OCI-LY7 (cell line): ENCODE measurements at regions of chr2 and their contacts with region 1.

Region 1: DNA sequence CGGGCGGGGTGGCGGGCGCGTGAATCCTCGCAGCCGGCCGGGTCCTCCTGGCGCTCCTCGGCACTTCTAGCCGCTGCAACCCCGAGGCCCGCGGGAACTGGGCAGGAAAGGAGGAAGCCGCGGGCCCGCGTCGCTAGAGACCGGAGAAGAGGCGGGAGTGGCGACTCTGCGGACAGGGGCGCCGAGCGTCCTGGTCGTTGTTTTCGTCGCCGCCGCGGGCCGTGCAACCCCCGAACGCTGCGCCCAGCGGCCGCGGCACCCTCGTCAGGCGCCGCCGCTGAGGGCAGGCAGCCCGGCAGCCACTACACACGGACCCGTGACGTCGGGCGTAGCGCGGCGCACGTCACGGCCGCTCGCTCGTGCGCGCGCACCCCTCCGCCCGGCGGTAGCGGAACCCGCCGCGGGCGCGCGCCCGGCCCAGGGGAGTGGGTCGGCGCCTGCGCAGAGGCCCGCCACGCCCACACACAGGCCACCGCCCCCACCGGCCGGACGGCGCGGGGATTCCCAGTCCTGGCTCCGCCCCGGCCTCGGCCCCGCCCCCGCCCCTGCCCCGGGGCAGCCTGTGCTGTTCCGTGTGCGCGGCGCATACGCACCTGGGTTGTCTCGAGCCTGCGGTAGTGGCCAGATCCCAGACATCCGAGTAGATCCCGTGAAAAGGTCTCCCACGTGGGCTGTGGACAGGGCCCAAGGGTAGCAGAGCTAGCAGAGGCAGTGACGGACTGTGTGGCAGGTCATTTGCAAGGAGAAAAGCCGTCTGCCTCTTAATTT is at the start of gene MAP3K2:
- DNase-seq: peak; percentile 96
- H3K4me3 ChIP-seq: peak within 1 kb of the TSS; percentile 95
- H3K27ac ChIP-seq: peak within 1 kb of the TSS; percentile 98
- H3K4me1 ChIP-seq: peaks cover 68% of the 10 kb centered on the region
- CTCF ChIP-seq: no peak
- total RNA-seq, gene MAP3K2: 33.2 and 47.5 TPM in 2 replicates

Region 2: GRCh38 chr2:126657636-126658318 is 730.1 kb before region 1 on chr2:
- CTCF ChIA-PET with region 1: no interaction called
- POLR2A ChIA-PET with region 1: no interaction called
- intact Hi-C with region 1: loop called (anchors 5 kb)
- DNase-seq: peak; percentile 90
- H3K4me3 ChIP-seq: peak overlapping the region; percentile 74
- H3K27ac ChIP-seq: peak overlapping the region; percentile 82
- H3K4me1 ChIP-seq: peaks cover 58% of the 10 kb centered on the region
- CTCF ChIP-seq: no peak

Region 3: DNA sequence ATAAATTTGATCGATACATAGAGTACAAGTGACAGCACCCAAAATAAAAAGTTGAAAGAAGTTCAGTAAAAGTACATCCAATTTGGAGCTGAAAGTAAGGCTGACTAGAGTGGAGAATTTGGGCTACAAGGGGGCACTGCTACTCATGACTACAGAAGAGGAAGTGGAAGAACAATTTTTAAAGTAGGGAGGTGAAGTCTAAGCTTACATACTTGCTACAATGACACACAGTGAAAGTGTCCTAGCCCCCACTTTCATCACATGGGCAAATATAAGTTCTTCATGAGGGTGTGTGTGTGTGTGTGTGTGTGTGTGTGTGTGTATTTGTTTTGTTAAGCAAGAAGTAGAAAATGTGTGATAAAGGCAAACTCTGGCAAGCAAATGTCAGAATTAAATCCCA is 45.7 kb before region 1 on chr2:
- CTCF ChIA-PET with region 1: no interaction called
- POLR2A ChIA-PET with region 1: interaction called, 6 read pairs
- intact Hi-C with region 1: loop called (anchors 2 kb)
- DNase-seq: peak; percentile 22
- H3K4me3 ChIP-seq: no peak overlapping the region
- H3K27ac ChIP-seq: no peak overlapping the region
- H3K4me1 ChIP-seq: peaks cover 32% of the 10 kb centered on the region
- CTCF ChIP-seq: 0 out of 2 replicates have a peak, but pooled peaks have one; percentile 17

Region 4: DNA sequence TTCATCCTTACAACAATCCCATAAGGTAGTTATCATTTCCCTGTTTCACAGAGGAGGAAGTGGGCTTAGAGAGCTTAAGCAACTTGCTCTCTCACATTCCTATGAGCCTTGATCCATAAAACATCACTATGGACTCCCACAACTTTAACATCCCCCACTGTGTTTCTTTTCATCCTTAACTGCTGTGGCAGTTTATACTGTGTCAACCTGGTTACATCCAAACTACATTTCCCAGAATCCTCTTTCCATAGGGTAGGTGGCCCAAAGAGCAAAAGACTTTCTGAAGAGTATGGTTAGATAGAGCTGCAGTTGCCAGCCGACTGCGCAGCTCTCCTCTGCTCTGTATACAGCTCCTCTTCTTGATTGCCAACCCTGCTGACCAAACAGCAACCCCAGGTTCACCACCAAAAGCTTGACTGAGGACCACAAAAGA is 22.6 kb before region 1 on chr2:
- CTCF ChIA-PET with region 1: no interaction called
- POLR2A ChIA-PET with region 1: interaction called, 6 read pairs
- intact Hi-C with region 1: loop called (anchors 2 kb)
- DNase-seq: no peak
- H3K4me3 ChIP-seq: no peak overlapping the region
- H3K27ac ChIP-seq: no peak overlapping the region
- H3K4me1 ChIP-seq: no peaks in the 10 kb centered on the region
- CTCF ChIP-seq: no peak

Region 5: GRCh38 chr2:127415593-127416505 is 28.0 kb after region 1 on chr2:
- CTCF ChIA-PET with region 1: interaction called, 5 read pairs
- POLR2A ChIA-PET with region 1: interaction called, 9 read pairs
- intact Hi-C with region 1: loop called (anchors 2 kb)
- DNase-seq: peak; percentile 76
- H3K4me3 ChIP-seq: peak overlapping the region; percentile 59
- H3K27ac ChIP-seq: no peak overlapping the region
- H3K4me1 ChIP-seq: peaks cover 36% of the 10 kb centered on the region
- CTCF ChIP-seq: peak; percentile 80

Region 6: DNA sequence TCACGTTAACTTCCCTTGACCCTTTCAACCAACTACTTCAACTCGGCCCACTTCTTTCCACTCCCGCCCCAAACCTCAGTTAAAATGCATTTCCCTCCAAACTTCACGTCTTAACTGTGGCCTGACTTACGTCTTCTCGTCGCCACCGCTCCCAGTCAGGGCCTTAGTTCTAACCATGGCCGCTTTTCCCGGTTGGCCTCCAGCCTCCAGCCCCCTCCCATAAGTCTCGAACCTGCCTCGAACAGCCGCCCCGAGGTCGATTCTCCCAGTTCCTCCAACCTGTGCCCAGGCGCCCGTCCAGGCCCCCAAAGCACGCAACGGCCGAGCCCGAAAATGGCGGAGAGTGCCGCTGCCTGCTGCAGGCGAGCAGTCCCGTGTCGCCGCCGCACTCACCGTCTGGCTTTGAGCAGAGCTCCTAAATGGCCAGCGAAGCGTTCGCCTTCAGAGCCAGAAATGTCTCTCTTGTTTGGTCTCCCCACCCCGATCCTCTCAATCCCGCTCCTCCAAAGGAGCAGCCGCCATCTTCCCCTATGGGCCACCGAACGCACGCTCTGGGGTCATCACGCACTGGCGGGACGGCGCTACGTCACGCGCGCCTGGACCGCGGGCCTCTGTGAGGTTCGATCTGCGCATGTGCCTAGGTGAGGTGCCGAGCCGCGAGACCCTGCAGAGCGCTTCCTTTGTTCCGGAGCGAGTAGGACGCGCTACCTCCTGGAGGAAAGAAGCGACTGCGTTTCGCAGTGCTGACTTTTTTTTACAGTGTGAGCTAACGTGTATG is 423.0 kb after region 1 on chr2 and contains the start of gene WDR33:
- CTCF ChIA-PET with region 1: no interaction called
- POLR2A ChIA-PET with region 1: no interaction called
- intact Hi-C with region 1: loop called (anchors 10 kb)
- DNase-seq: peak; percentile 98
- H3K4me3 ChIP-seq: peak within 1 kb of the TSS; percentile 91
- H3K27ac ChIP-seq: peak within 1 kb of the TSS; percentile 84
- H3K4me1 ChIP-seq: peaks cover 53% of the 10 kb centered on the region
- CTCF ChIP-seq: peak; percentile 44; the same call in 1 of the 2 replicates
- total RNA-seq, gene WDR33: 60.6 and 70.7 TPM in 2 replicates